IMR-90 (cell line): ENCODE measurements at regions of chr11 and their contacts with region 1.

Region 1: DNA sequence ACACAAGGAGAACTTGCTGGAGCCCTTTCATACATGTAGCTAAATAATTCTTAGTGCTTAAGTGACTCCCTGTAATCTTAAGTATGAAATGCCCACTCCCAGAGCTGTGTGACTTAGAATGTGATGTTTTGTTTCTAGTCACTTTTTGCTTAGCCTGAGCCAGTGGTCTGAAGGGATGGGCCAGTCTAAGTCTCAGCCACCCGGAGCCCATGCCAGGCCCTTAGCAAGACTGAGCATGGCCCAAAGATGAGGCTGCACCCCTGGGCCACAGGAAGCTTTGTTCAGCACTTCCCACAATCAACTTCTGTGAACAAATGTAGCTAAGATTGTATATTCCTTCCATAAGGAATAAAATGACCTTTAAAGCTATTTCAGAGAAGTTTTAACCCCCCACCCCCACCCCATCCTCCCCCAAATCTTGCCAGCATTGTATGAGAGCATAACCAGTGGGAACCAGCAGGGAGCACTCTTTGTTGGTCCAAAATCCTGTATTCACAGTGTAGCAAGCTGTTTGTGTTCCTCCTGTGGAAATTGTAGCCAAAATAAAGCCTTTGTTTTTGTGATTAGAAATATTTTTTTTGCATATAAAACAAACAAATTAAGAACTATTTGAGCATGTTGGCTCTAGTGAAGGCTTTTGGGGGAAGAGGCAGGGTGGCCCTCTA is 73.8 kb upstream of the GAL start:
- DNase-seq: peak; percentile 5
- ATAC-seq: peak; percentile 62; the same call in 1 of the 2 replicates
- H3K4me3 ChIP-seq: no peak overlapping the region
- H3K27ac ChIP-seq: no peak overlapping the region
- H3K4me1 ChIP-seq: no peaks in the 10 kb centered on the region
- H3K27me3 ChIP-seq: no peaks in the 10 kb centered on the region
- CTCF ChIP-seq: peak; percentile 34
- POLR2A ChIP-seq: no peak
- RAD21 ChIP-seq: peak; percentile 44

Region 2: GRCh38 chr11:68673301-68673945 is 62.8 kb after region 1 on chr11:
- CTCF ChIA-PET with region 1: no interaction called
- POLR2A ChIA-PET with region 1: no interaction called
- dilution Hi-C with region 1: no loop called
- in situ Hi-C with region 1: no loop called
- intact Hi-C with region 1: no loop called
- DNase-seq: no peak
- ATAC-seq: no peak
- H3K4me3 ChIP-seq: no peak overlapping the region
- H3K27ac ChIP-seq: no peak overlapping the region
- H3K4me1 ChIP-seq: no peaks in the 10 kb centered on the region
- H3K27me3 ChIP-seq: peaks cover 7% of the 10 kb centered on the region
- CTCF ChIP-seq: no peak
- POLR2A ChIP-seq: no peak
- RAD21 ChIP-seq: no peak

Region 3: GRCh38 chr11:68727785-68728184 is 117.2 kb after region 1 on chr11:
- CTCF ChIA-PET with region 1: no interaction called
- POLR2A ChIA-PET with region 1: no interaction called
- dilution Hi-C with region 1: no loop called
- in situ Hi-C with region 1: no loop called
- intact Hi-C with region 1: loop called (anchors 10 kb)
- DNase-seq: peak; percentile 8
- ATAC-seq: peak; percentile 49; the same call in 1 of the 2 replicates
- H3K4me3 ChIP-seq: no peak overlapping the region
- H3K27ac ChIP-seq: no peak overlapping the region
- H3K4me1 ChIP-seq: no peaks in the 10 kb centered on the region
- H3K27me3 ChIP-seq: peaks cover 34% of the 10 kb centered on the region
- CTCF ChIP-seq: peak; percentile 27
- POLR2A ChIP-seq: no peak
- RAD21 ChIP-seq: no peak

Region 4: GRCh38 chr11:69088676-69089146 is 478.1 kb after region 1 on chr11:
- CTCF ChIA-PET with region 1: no interaction called
- POLR2A ChIA-PET with region 1: no interaction called
- dilution Hi-C with region 1: no loop called
- in situ Hi-C with region 1: no loop called
- intact Hi-C with region 1: loop called (anchors 10 kb)
- DNase-seq: peak; percentile 76
- ATAC-seq: peak; percentile 83
- H3K4me3 ChIP-seq: no peak overlapping the region
- H3K27ac ChIP-seq: no peak overlapping the region
- H3K4me1 ChIP-seq: peaks cover 9% of the 10 kb centered on the region
- H3K27me3 ChIP-seq: no peaks in the 10 kb centered on the region
- CTCF ChIP-seq: peak; percentile 86
- POLR2A ChIP-seq: no peak
- RAD21 ChIP-seq: peak; percentile 91

Region 5: GRCh38 chr11:69670158-69670845 is 1059.7 kb after region 1 on chr11:
- CTCF ChIA-PET with region 1: no interaction called
- POLR2A ChIA-PET with region 1: no interaction called
- dilution Hi-C with region 1: no loop called
- in situ Hi-C with region 1: loop called (anchors 25 kb)
- intact Hi-C with region 1: no loop called
- DNase-seq: peak; percentile 84
- ATAC-seq: peak; percentile 69
- H3K4me3 ChIP-seq: no peak overlapping the region
- H3K27ac ChIP-seq: no peak overlapping the region
- H3K4me1 ChIP-seq: peaks cover 7% of the 10 kb centered on the region
- H3K27me3 ChIP-seq: no peaks in the 10 kb centered on the region
- CTCF ChIP-seq: peak; percentile 94
- POLR2A ChIP-seq: peak; percentile 63
- RAD21 ChIP-seq: peak; percentile 94